Gastrocnemius medialis (tissue), 4 donors: ENCODE measurements at regions of chrX and their contacts with region 1.

Region 1: GRCh38 chrX:22616867-22617266 is 344.2 kb downstream of the CBLL2 start:
- DNase-seq: no peak
- ATAC-seq: no peak
- H3K4me3 ChIP-seq: no peak overlapping the region
- H3K27ac ChIP-seq: no peak overlapping the region
- H3K4me1 ChIP-seq: no peaks in the 10 kb centered on the region
- H3K27me3 ChIP-seq: no peaks in the 10 kb centered on the region
- CTCF ChIP-seq: no peak
- POLR2A ChIP-seq: no peak

Region 2: GRCh38 chrX:22629105-22629725 is 12.3 kb after region 1 on chrX:
- in situ Hi-C with region 1: no loop called
- intact Hi-C with region 1: loop called (anchors 1 kb)
- DNase-seq: no peak
- ATAC-seq: no peak
- H3K4me3 ChIP-seq: no peak overlapping the region
- H3K27ac ChIP-seq: no peak overlapping the region
- H3K4me1 ChIP-seq: no peaks in the 10 kb centered on the region
- H3K27me3 ChIP-seq: no peaks in the 10 kb centered on the region
- CTCF ChIP-seq: no peak
- POLR2A ChIP-seq: no peak